ENCODE measurements at regions of chr7 and their contacts with region 1.

Region 1: DNA sequence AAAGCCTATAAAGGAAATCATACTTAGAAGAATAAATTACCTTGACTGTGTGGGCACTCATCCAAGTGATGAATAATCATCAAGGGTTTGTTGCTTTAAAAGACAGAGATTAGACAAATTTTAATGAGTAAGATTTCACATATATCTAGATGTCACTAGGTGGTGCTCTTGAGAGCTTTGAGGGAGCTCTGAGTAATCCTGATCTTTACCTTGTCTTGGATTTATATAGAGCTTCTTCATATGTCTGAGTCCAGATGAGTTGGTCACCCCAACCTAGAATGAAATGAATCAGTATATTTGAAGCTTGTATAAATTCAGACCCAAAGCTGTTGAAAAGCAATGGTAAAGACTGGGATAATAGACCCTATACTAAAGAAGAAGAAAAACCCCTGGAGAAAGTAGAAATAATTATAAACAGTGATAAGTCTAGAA is 3.7 kb downstream of the AGR2 start:
- DNase-seq: peak; percentile 80 to 84
- ATAC-seq: peak; percentile 61 to 77; a peak in 4 of 6 replicates
- H3K4me3 ChIP-seq: no peak overlapping the region
- H3K27ac ChIP-seq: peak overlapping the region; percentile 42 to 71; a peak in 5 of 6 replicates
- H3K4me1 ChIP-seq: peaks cover 43% of the 10 kb centered on the region
- CTCF ChIP-seq: peak; percentile 79
- EP300 ChIP-seq: no peak
- POLR2A ChIP-seq: no peak
- RAD21 ChIP-seq: peak; percentile 85 to 88

Region 2: DNA sequence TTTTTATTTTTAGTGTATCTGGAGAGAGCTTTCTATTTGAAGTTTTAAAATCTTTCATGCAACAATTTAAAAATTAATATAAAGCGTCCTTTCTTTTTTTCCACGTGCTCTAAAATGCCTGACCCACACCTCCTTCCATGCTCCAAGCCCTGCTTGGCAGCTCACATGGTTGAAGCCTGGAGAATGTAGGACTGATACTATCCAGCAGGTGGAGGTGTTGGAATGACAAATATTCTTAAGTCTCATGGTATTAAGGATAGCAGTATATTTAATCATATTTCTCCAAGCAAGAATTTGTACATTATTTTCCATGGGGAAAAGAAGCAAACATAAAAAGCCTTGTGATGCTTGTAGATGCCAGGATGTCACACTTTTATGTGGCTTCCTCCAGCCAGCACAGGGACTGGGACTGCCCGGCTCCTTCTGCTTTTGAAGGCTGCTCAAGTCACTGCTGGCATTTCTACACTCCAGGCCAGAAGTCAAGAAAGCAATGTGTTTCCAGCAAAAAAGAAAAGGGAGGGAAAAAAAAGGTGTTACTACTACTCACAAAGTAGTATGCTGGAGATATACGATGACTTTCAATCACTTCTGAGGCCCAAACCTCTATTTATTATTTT is 105.4 kb before region 1 on chr7:
- CTCF ChIA-PET with region 1: interaction called, 35 read pairs
- POLR2A ChIA-PET with region 1: no interaction called
- DNase-seq: peak; percentile 67 to 80
- ATAC-seq: peak; percentile 91 to 94
- H3K4me3 ChIP-seq: no peak overlapping the region
- H3K27ac ChIP-seq: no peak overlapping the region
- H3K4me1 ChIP-seq: no peaks in the 10 kb centered on the region
- CTCF ChIP-seq: peak; percentile 76
- EP300 ChIP-seq: no peak
- POLR2A ChIP-seq: no peak
- RAD21 ChIP-seq: peak; percentile 78 to 80

Region 3: DNA sequence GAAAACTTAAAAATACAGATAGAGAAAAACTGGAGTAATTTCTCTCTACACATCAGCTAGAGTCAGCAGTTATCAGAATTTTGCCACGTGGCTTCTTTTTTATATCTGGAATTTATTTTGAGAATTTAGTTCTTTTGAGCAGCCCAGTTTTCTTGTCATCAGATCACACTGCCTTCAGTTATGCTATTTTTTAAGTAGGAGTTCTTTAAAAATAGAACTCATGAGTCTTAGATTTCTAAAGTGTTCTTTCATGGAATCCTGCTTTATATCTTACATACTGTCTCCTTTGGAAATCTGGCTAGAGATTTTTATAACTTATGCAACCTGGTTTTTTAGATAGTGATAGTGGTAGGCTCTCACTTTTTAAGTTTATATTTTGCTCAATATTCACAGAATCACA is 20.5 kb before region 1 on chr7:
- CTCF ChIA-PET with region 1: no interaction called
- POLR2A ChIA-PET with region 1: no interaction called
- DNase-seq: no peak
- ATAC-seq: no peak
- H3K4me3 ChIP-seq: no peak overlapping the region
- H3K27ac ChIP-seq: no peak overlapping the region
- H3K4me1 ChIP-seq: no peaks in the 10 kb centered on the region
- CTCF ChIP-seq: no peak
- EP300 ChIP-seq: no peak
- POLR2A ChIP-seq: no peak
- RAD21 ChIP-seq: no peak

Region 4: DNA sequence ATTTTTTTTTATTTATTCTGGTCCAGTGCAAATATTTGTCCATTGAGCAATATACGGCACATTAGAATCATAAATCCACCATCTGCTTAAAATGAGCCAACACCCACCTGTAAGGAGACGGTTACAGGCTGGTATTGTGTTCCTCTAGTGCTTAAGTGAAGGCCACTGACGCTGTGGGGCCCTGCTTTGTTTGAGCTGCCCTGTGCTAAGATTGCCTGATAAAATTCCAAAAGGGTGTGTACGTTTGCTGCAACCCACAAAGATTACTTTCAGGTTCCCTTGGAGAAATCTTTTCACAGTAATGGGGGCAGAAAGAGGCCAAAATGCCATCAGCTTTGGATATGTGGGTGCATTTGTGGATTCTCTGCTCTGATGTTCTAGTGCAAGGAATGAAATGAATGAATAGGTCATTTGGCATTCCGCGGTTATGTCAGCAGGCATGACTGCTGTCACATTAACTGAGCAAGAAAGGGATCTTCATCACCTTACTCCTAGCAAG is 46.3 kb after region 1 on chr7:
- CTCF ChIA-PET with region 1: interaction called, 4 read pairs
- POLR2A ChIA-PET with region 1: interaction called, 14 read pairs
- DNase-seq: peak; percentile 74 to 98
- ATAC-seq: peak; percentile 99 to 100
- H3K4me3 ChIP-seq: peak overlapping the region; percentile 3; the same call in 1 of the 3 replicates
- H3K27ac ChIP-seq: peak overlapping the region; percentile 81 to 85
- H3K4me1 ChIP-seq: peaks cover 26% of the 10 kb centered on the region
- CTCF ChIP-seq: no peak
- EP300 ChIP-seq: peak; percentile 83 to 94; a peak in 4 of 5 replicates
- POLR2A ChIP-seq: no peak
- RAD21 ChIP-seq: peak; percentile 50 to 66

Region 5: DNA sequence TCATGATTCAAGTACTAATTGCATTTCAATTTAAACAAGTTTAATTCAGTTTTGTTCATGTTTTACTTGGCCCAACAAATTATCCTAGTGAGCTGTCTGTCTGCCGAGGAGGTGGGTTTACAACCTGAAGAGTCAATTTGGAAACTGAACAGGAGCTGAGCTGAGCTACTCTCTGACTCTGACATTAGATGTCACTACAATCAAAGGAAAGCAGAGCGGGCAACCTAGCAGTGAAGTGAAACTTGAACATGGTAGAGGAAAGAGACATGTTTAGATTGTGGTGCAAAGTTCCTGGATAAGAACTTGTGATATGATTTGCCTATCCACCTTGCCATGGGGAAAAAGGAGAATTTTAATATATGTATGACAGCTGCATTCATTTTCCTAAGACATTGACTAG is 90.2 kb after region 1 on chr7:
- CTCF ChIA-PET with region 1: interaction called, 12 read pairs
- POLR2A ChIA-PET with region 1: no interaction called
- DNase-seq: peak; percentile 12 to 78
- ATAC-seq: peak; percentile 97 to 98
- H3K4me3 ChIP-seq: no peak overlapping the region
- H3K27ac ChIP-seq: peak overlapping the region; percentile 15 to 35; a peak in 2 of 6 replicates
- H3K4me1 ChIP-seq: peaks cover 21% of the 10 kb centered on the region; the same call in 2 of the 3 replicates
- CTCF ChIP-seq: peak; percentile 77
- EP300 ChIP-seq: no peak
- POLR2A ChIP-seq: no peak
- RAD21 ChIP-seq: peak; percentile 96 to 97

Region 6: GRCh38 chr7:16918288-16918895 is 117.3 kb after region 1 on chr7:
- CTCF ChIA-PET with region 1: interaction called, 46 read pairs
- POLR2A ChIA-PET with region 1: interaction called, 4 read pairs
- DNase-seq: peak in 1 of 2 experiments; percentile 68
- ATAC-seq: no peak
- H3K4me3 ChIP-seq: no peak overlapping the region
- H3K27ac ChIP-seq: peak overlapping the region; percentile 43 to 63; a peak in 4 of 6 replicates
- H3K4me1 ChIP-seq: peaks cover 57% of the 10 kb centered on the region
- CTCF ChIP-seq: peak; percentile 92
- EP300 ChIP-seq: no peak
- POLR2A ChIP-seq: no peak
- RAD21 ChIP-seq: peak; percentile 82 to 89

Region 7: GRCh38 chr7:16982640-16983350 is 181.7 kb after region 1 on chr7:
- CTCF ChIA-PET with region 1: interaction called, 10 read pairs
- POLR2A ChIA-PET with region 1: no interaction called
- DNase-seq: peak in 1 of 2 experiments; percentile 60
- ATAC-seq: 0 out of 6 replicates have a peak, but pooled peaks of 1 of the 2 experiments have one; percentile 27
- H3K4me3 ChIP-seq: no peak overlapping the region
- H3K27ac ChIP-seq: peak overlapping the region; percentile 43 to 49
- H3K4me1 ChIP-seq: peaks cover 29% of the 10 kb centered on the region
- CTCF ChIP-seq: peak; percentile 97
- EP300 ChIP-seq: no peak
- POLR2A ChIP-seq: no peak
- RAD21 ChIP-seq: peak; percentile 96